AG04450 (cell line): ENCODE measurements at regions of chr12 and their contacts with region 1.

Region 1: GRCh38 chr12:32737715-32738114 is 18.0 kb downstream of the YARS2 start:
- DNase-seq: no peak
- H3K4me3 ChIP-seq: no peak overlapping the region
- H3K27ac ChIP-seq: no peak overlapping the region
- H3K27me3 ChIP-seq: no peaks in the 10 kb centered on the region
- CTCF ChIP-seq: no peak

Region 2: GRCh38 chr12:32702473-32702872 is 35.2 kb before region 1 on chr12:
- CTCF ChIA-PET with region 1: interaction called, 13 read pairs
- POLR2A ChIA-PET with region 1: no interaction called
- DNase-seq: no peak
- H3K4me3 ChIP-seq: no peak overlapping the region
- H3K27ac ChIP-seq: no peak overlapping the region
- H3K27me3 ChIP-seq: no peaks in the 10 kb centered on the region
- CTCF ChIP-seq: no peak

Region 3: GRCh38 chr12:32718926-32719325 is 18.8 kb before region 1 on chr12:
- CTCF ChIA-PET with region 1: no interaction called
- POLR2A ChIA-PET with region 1: no interaction called
- DNase-seq: no peak
- H3K4me3 ChIP-seq: no peak overlapping the region
- H3K27ac ChIP-seq: no peak overlapping the region
- H3K27me3 ChIP-seq: no peaks in the 10 kb centered on the region
- CTCF ChIP-seq: no peak